ENCODE measurements at regions of chr10 and their contacts with region 1.

Region 1: GRCh38 chr10:15859906-15860691 is at the start of gene MINDY3:
- H3K4me3 Mint-ChIP-seq: peak within 1 kb of the TSS; percentile 100
- H3K27ac Mint-ChIP-seq: peak within 1 kb of the TSS; percentile 94
- H3K4me1 Mint-ChIP-seq: peaks cover 26% of the 10 kb centered on the region
- H3K27me3 Mint-ChIP-seq: peaks cover 14% of the 10 kb centered on the region

Region 2: DNA sequence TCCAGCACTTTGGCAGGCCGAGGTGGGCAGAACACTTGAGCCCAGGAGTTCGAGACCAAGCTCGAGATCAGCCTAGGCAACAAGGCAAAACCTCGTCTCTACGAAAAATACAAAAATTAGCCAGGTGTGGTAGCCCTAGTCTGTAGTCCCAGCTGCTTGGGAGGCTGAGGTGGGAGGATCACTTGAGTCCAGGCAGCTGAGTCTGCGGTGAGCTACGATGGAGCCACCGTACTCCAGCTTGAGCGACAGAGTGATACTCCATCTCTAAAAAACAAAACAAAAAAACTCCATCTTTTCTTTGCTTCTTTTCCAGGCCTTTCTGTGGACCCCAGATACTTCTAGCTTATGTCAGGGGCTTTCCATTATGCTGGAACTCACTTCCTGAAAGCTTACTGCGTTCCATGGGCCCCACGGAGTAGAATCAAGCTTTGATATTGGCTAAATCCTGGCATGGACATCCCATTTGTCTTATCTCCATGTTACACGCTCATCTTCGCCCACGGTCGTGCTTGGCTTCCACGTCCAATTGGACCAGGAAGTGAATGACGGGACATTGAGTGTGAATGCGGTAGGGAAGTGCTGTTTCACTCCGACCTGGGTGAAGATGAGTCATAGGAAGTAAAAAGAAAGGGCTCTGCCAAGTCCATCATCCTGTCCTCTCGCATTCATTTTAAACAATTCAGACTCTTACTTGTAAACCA is 534.7 kb before region 1 on chr10:
- intact Hi-C with region 1: no loop called
- H3K4me3 Mint-ChIP-seq: no peak overlapping the region
- H3K27ac Mint-ChIP-seq: no peak overlapping the region
- H3K4me1 Mint-ChIP-seq: no peaks in the 10 kb centered on the region
- H3K27me3 Mint-ChIP-seq: peaks cover 6% of the 10 kb centered on the region

Region 3: DNA sequence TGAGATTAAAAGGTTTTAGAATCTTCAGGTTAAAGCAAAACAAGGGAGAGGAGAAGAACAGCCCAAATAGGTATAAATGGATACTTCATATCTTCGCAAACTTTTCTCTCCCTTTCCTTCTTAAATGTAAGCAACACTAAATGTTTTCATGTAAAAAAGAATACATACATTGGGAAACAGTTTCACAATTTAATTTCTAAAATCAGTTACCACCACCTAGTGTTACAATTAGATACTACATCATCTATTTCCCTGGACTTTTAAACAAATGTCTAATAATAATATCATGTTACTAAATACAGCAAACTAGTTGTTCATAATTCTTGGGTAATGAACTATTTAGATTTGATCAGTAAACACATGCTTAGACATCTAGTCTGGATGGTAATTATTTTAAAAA is 35.6 kb before region 1 on chr10:
- intact Hi-C with region 1: no loop called
- H3K4me3 Mint-ChIP-seq: no peak overlapping the region
- H3K27ac Mint-ChIP-seq: no peak overlapping the region
- H3K4me1 Mint-ChIP-seq: no peaks in the 10 kb centered on the region
- H3K27me3 Mint-ChIP-seq: no peaks in the 10 kb centered on the region

Region 4: GRCh38 chr10:15972736-15973462 is 112.8 kb after region 1 on chr10:
- intact Hi-C with region 1: no loop called
- H3K4me3 Mint-ChIP-seq: no peak overlapping the region
- H3K27ac Mint-ChIP-seq: no peak overlapping the region
- H3K4me1 Mint-ChIP-seq: no peaks in the 10 kb centered on the region
- H3K27me3 Mint-ChIP-seq: no peaks in the 10 kb centered on the region

Region 5: DNA sequence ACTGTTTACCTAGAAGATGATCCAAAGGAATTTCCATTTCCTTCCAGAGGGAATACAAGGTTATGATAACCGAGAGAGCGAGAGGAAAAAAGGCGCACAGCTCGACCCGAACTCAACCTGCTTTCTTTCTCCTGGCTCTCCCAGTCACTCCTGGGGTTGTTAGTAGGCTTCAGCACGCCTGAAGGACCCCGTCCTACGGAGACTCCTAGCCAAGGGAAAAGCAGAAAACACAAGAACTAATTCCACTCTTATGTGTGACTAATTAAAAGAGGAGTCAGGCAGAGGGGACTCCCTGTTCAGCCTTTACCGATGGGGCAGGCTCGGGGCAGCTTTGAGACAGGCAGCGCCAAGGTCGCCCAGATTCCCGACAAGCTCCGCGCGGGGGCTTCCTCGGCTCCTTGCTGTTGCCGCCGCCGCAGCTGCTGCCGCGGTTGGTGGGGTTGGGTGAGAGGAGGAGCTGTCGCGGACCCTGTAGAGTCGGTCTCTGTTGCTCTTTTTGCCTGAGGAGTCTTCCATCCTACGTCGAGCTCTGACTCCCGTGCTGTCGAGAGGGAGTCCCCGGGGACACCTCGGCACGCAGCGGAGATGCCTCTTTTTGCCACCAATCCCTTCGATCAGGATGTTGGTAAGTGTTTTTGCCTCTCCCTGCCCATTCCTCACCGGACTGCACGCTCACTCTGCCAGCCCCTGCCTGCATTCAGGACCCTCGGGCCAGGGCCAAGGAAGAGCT is 1783.8 kb after region 1 on chr10 and contains the start of gene STAM:
- intact Hi-C with region 1: loop called (anchors 5 kb)
- H3K4me3 Mint-ChIP-seq: peak within 1 kb of the TSS; percentile 99
- H3K27ac Mint-ChIP-seq: peak within 1 kb of the TSS; percentile 99
- H3K4me1 Mint-ChIP-seq: peaks cover 41% of the 10 kb centered on the region
- H3K27me3 Mint-ChIP-seq: no peaks in the 10 kb centered on the region

Measured in dendritic cell treated with granulocyte-macrophage colony-stimulating factor and Interleukin-4, amounts not matched to agents 40 ng/mL and 50 ng/mL, for 4 days (primary cell).